Activated T-helper 1 cell treated with anti-CD3 and anti-CD28 coated beads, Interleukin-12 subunit alpha, Interleukin-12 subunit beta, Interleukin-2, Interleukin-4 antibody, amounts not matched to agents 30 ng/mL and 10 ng/mL and 1 ng/mL, durations not matched to agents 14 hours and 24 hours and 36 hours (primary cell): ENCODE measurements at regions of chr15 and their contacts with region 1.

Region 1: DNA sequence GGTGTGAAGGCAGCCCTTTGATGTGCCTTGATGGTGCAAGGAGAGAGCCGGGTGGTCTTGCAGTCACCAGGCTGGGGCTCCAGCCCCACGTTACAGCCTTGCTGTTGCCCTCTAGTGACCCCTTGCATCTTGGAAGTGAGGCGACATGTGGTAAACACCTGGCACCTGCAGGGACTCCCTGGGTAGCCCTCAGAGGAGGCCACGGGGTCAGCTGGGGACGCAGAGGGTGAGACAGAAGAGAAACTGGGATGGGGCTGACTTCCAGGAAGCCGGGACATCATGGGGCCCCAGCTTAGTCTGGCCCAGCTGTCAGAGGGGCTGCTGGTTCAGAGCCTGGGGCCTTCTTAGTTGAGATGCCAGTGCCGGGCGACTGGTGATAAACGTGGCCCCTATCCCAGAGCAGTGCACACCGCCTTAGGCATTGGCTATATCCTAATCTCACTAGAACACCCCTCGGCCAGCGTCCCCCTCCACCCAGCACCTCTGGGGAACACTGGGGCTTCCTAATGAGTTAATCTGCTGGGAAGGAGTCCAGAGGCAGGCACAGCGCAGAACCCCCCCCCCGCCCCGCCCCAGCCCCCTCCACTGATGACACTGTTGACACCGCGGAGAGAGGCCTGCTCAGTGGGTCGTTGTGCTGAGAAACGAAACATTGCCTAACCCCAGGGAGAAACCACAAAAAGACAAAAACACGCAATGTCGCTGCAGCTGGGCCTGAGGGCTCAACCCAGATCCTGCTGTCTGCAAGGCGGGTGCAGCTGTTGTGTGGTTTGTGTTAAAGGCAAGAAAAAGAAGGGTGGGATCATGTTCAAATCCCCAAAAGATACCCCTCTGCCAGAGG is 60.5 kb upstream of the KLF13 start:
- DNase-seq: peak; percentile 79
- H3K4me3 Mint-ChIP-seq: peak overlapping the region; percentile 52
- H3K27ac Mint-ChIP-seq: peak overlapping the region; percentile 79
- H3K4me1 Mint-ChIP-seq: peaks cover 94% of the 10 kb centered on the region
- H3K27me3 Mint-ChIP-seq: no peaks in the 10 kb centered on the region

Region 2: DNA sequence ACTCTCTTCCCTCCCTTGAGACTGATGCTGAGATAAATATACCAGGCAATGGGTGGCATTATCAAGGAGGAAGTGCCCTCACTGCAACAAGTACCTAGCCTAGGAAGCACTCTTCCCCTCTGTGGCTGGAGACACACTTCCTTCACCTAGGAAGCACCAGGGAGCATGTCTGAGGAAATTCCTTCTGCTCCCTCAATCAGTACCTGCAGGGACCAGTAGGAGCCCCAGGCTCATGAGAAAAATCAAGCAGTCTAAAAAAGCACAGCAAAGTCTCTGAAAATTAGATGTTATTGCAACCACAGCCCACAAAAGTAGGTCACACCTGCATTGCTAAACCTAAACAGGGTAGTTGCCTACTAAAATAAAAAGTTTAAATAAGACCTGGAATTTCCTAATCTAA is 86.4 kb before region 1 on chr15:
- intact Hi-C with region 1: no loop called
- DNase-seq: no peak
- H3K4me3 Mint-ChIP-seq: no peak overlapping the region
- H3K27ac Mint-ChIP-seq: no peak overlapping the region
- H3K4me1 Mint-ChIP-seq: peaks cover 11% of the 10 kb centered on the region
- H3K27me3 Mint-ChIP-seq: peaks cover 3% of the 10 kb centered on the region

Region 3: DNA sequence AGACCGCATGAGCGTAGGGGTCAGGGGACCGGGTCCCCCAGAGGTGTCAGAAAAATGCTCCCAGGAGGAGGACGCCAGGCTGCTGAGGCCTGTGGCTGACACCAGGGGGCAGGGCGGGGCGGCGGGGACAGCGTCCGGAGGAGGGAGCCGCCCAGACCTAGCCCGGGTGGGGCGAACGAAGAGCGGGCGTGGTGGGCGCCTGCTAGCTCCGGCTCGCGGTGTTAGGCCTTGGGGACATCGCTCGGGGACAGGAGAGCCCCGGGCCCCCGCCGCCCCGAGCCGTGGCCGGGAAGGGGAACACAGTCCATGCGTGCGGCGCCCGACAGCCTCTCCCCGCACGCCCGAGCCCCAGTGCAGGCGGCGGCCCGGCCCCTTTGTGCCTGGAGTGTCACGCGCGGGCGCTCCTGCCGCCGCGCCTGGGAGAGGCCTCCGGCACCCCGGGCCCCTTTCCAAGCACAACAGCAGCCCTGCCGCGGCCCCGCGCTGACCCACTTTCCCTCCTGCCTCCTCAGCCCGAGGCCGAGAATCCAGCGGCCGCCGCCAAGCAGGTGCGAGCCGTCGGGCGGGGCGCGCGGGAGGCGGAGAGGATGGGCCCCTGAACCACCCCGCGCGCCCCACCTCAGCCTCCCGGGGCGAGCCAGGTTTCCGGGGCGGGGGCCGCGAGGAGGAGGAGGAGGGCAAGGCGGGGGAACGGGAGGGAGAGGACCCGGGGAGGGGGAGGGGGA is 50.4 kb before region 1 on chr15:
- intact Hi-C with region 1: loop called (anchors 2 kb)
- DNase-seq: peak; percentile 76
- H3K4me3 Mint-ChIP-seq: peak overlapping the region; percentile 79
- H3K27ac Mint-ChIP-seq: peak overlapping the region; percentile 73
- H3K4me1 Mint-ChIP-seq: peaks cover 48% of the 10 kb centered on the region
- H3K27me3 Mint-ChIP-seq: no peaks in the 10 kb centered on the region

Region 4: DNA sequence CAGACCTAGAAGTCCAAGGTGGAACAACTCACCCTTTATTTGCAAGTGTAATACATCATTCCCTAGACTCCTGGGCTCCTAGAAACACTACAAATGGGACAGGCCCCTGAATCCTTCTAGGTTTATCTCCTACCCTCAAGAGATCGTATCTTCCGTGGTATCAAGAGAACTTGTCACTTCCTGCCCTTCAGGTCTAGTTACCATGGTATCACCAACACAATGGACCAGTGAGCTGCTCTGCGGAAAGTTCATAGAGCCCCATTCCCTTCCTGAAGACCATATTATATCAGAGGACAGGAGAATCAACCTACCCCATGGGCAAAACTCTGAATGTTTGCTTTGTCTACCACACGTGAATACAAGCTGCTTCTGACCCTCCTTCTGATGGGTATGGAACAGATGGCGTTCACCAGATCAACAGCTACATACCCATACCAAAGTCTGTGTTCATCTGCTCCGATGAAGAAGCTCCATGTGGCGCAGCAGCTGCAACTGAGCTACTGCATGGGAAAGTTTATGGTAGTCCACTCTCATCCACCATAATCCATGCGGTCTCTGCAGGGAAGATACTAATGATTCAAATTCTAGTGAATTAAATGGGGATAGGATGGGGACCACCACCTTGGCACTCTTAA is 24.1 kb before region 1 on chr15:
- intact Hi-C with region 1: loop called (anchors 2 kb)
- DNase-seq: peak; percentile 39
- H3K4me3 Mint-ChIP-seq: peak overlapping the region; percentile 4
- H3K27ac Mint-ChIP-seq: peak overlapping the region; percentile 56
- H3K4me1 Mint-ChIP-seq: peaks cover 52% of the 10 kb centered on the region
- H3K27me3 Mint-ChIP-seq: peaks cover 8% of the 10 kb centered on the region

Region 5: DNA sequence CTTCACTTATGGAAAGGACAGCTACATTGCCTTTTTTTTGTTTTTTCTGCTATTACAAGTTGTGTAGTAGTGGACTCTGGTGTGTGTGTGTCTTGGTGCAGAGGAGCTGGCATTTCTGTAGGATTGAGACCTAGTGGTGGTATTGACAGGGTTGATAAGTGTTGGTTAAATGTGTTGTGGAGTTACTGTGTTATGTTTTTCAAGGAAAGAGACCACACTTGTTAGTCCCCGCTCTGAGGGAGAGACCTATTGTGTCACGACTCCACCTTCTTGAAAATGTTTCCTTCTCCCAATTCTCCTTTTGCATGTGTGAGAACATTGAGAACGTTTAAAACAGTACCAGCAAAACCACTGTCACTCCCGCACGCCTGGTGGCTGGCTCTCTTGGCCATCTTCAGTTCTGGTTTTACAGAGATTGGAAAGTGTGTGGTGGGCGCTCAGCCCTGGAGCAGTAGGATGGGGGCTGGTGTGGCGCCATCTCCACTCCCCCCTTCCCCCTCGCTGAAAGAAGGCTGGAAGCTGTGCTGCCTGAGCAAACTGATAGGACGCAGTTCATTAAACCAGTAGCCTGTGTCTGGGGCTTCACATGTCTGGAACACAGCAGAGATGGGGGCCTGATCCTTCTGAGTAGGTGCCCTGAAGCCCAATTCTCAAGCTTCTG is 66.1 kb after region 1 on chr15:
- intact Hi-C with region 1: no loop called
- DNase-seq: no peak
- H3K4me3 Mint-ChIP-seq: peak overlapping the region; percentile 95
- H3K27ac Mint-ChIP-seq: peak overlapping the region; percentile 36
- H3K4me1 Mint-ChIP-seq: peaks cover 86% of the 10 kb centered on the region
- H3K27me3 Mint-ChIP-seq: no peaks in the 10 kb centered on the region

Region 6: DNA sequence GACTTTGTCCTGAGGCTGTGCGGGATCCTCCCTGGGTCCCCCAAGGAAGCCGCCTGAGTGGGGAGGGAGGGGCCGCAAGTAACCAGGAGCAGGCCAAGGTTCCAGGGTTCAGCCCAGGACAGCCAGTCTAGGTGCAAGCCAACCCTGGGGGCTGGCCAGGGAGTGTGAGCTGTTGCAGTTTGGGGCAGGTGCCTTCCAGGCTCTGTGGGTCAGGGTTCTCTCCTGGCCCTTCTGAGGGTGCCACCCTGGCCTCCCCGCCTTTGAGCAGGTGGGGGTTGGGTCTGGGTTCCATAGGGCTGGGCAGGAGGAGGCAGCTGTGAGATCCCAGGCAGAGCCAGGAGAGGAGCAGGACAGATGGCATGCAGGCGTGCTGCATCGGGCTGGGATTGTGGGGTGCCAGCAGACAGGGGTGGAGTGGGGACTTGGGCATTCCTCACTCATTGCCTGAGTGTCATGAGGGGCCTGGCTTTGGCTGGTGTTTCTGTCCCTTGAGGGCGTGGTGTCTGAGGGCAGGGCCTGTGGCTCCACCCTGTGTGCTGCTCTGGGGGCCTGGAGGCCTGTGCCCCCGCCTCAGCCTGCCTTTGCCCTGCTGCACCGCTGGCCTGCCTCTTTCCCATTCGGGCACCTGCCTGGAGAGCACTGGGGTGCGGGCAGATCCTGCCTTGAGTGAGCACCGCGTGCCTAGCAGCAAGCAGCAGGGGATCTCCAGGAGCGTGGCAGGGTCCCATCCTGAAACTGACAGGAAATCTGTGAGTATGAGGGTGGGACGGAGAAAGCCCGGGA is 78.9 kb after region 1 on chr15:
- intact Hi-C with region 1: loop called (anchors 2 kb)
- DNase-seq: no peak
- H3K4me3 Mint-ChIP-seq: peak overlapping the region; percentile 89
- H3K27ac Mint-ChIP-seq: peak overlapping the region; percentile 99
- H3K4me1 Mint-ChIP-seq: peaks cover 94% of the 10 kb centered on the region
- H3K27me3 Mint-ChIP-seq: no peaks in the 10 kb centered on the region

Region 7: DNA sequence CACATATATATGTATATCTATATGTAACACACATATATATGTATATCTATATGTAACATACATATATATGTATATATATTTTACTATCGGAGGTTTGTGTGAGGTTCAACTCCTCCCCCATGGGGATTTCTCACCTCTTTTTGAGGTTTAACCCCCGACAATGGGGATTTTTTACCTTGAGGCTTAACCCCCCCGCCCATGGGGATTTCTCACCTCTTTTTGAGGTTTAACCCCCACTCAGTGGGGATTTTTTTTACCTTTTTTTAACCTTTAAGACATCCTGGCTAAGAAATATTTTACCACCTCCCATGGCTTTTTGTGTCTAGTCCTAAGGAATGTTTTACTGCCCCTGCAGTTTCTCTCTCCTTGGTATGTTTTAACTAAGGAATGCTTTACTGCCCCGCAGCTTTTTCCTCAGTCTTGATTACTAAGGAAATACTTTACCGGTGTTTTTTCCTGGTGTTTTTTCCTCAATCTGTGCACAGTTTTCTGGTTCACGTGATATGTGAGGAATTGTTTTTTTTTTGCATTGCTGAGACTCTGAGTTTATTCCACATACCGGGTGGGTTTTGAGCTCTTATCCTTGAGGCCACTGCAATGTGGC is 245.7 kb after region 1 on chr15:
- intact Hi-C with region 1: loop called (anchors 1 kb)
- DNase-seq: peak; percentile 69
- H3K4me3 Mint-ChIP-seq: peak overlapping the region; percentile 68
- H3K27ac Mint-ChIP-seq: peak overlapping the region; percentile 55
- H3K4me1 Mint-ChIP-seq: peaks cover 72% of the 10 kb centered on the region
- H3K27me3 Mint-ChIP-seq: peaks cover 5% of the 10 kb centered on the region